Ascending aorta (tissue), 2 donors: ENCODE measurements at regions of chr4 and their contacts with region 1.

Region 1: DNA sequence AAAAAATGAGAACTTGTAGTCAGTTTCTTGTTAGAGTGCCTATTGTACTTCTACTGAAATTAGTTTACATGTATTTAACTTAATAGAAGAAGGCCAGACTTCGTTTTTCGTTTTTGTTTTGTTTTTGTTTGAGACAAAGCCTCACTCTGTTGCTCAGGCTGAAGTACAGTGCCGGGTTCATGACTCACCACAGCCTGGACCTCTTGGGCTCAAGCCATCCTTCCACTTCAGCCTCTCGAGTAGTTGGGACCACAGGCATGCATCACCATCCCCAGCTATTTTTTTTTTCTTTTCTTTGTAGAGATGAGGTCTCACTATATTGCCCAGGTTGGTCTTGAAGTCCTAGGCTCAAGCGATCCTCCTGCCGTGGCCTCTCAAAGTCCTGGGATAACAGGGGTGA is 793.9 kb downstream of the ADGRL3 start:
- DNase-seq: no peak
- H3K4me3 ChIP-seq: no peak overlapping the region
- H3K27ac ChIP-seq: no peak overlapping the region
- H3K4me1 ChIP-seq: no peaks in the 10 kb centered on the region
- H3K27me3 ChIP-seq: no peaks in the 10 kb centered on the region
- CTCF ChIP-seq: no peak

Region 2: DNA sequence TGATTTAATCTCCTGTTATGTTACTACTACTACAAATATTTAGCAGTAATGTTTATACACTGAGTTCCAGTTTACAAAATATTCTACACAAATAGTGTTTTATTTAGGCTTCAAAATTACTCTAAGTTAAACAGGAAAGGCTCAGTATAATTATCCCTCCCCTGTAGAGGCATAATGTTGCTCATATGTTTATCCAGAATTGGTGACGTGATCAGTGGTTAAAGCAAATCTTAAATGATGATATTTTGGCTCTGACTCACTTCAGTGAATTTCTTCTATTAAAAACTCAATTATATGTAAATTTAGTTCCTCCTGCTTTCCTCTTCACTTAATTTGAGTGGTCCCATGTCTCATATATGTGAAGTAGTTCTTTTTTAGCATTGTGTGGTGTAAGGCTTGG is 355.4 kb before region 1 on chr4:
- intact Hi-C with region 1: loop called (anchors 10 kb)
- DNase-seq: no peak
- H3K4me3 ChIP-seq: no peak overlapping the region
- H3K27ac ChIP-seq: no peak overlapping the region
- H3K4me1 ChIP-seq: no peaks in the 10 kb centered on the region
- H3K27me3 ChIP-seq: no peaks in the 10 kb centered on the region
- CTCF ChIP-seq: no peak